ENCODE measurements at regions of chr7 and their contacts with region 1.

Region 1: GRCh38 chr7:117975476-117975875 is 102.2 kb upstream of the CTTNBP2 start:
- DNase-seq: peak; percentile 74
- H3K4me3 ChIP-seq: no peak overlapping the region
- H3K27ac ChIP-seq: peak overlapping the region; percentile 55
- H3K4me1 ChIP-seq: peaks cover 59% of the 10 kb centered on the region
- H3K27me3 ChIP-seq: no peaks in the 10 kb centered on the region
- CTCF ChIP-seq: no peak

Region 2: DNA sequence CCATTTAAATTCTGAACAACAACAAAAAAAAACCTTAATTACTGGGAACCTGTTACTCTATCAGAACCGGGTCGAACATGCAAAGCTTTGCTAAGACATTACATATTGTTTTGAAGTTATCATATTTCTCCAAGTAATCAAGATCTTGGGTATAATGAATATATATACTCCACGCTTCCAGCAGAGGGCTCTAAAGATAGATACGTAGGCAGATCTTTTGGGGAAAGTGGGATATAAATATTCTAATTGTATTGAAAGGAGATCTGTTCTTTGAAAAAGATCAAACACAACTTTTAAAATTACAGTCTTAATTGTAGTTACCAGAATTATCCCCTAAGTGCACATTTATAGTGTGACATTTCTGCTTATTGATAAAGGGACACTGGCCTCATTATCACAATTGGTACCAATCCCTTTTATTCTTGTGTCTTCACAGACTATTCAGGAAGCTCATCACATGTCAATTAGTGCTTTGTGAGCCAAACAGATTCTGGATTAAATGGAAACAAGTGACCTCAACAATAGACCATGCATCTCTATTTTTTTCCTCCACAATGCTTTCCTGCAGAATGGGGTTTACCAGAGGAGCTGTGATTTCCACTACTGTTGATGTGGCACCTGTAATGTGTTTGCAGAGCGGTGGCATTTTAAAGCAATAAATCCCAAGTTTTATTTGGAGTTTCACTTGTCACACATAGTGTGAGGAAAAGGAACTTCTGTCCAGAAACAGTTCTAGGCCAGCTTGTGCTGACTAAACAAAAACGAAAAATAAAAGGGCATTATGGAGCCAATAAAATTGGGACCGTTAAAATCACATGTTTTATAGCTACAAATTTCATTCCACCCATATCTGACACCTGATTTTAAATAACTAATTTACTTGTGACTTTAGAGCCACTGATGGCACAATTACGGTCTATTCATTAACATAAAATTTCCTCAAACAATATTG is 224.6 kb before region 1 on chr7:
- CTCF ChIA-PET with region 1: no interaction called
- POLR2A ChIA-PET with region 1: no interaction called
- intact Hi-C with region 1: loop called (anchors 2 kb)
- DNase-seq: peak; percentile 66
- H3K4me3 ChIP-seq: no peak overlapping the region
- H3K27ac ChIP-seq: no peak overlapping the region
- H3K4me1 ChIP-seq: peaks cover 15% of the 10 kb centered on the region
- H3K27me3 ChIP-seq: no peaks in the 10 kb centered on the region
- CTCF ChIP-seq: peak; percentile 74

Region 3: DNA sequence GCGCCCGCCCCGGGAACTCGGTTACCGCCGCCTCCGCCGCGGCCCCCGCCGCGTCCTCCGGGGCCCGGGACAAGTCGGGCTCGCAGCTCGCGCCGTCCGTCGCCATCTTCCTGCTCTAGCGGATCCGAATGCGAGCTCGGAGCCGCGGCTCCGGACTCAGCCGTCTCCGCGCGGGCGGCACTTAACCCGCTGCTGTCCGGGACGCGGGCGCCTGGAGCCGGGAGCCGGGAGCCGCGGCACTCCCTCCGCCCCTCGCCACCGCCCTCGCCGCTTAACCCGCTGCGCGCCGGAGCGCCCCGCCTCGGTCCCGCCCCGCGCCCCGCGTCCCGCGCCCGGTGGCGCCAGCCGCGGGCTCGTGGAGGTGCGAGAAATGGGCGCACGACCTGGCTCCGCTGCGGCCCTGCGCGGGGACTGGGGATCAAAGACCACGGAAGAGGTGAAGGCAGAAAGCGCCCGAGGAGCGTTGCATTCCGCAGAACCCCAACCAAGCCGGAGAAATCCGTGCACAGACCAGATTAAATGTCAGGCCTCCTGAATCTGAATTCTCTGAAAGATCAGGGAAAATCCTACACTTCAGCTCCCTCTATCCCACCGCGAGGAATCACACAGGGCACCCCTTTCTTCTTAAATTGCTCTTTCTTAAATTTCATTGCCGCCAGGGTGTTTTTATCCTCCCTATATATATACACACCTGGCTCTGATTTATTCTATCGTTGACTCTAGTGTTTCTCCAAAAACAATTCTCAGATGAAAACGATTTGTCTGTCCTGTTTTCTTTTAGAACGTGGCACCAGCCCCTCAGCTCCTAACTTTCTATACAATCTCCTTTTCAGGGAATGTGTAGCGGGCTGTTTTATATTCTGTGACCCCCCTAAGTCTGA is 101.9 kb before region 1 on chr7 and contains the start of gene CTTNBP2:
- CTCF ChIA-PET with region 1: no interaction called
- POLR2A ChIA-PET with region 1: no interaction called
- intact Hi-C with region 1: loop called (anchors 5 kb)
- DNase-seq: peak; percentile 65
- H3K4me3 ChIP-seq: peak within 1 kb of the TSS; percentile 85
- H3K27ac ChIP-seq: peak within 1 kb of the TSS; percentile 85
- H3K4me1 ChIP-seq: peaks cover 59% of the 10 kb centered on the region
- H3K27me3 ChIP-seq: no peaks in the 10 kb centered on the region
- CTCF ChIP-seq: peak; percentile 16; the same call in 1 of the 2 replicates
- total RNA-seq, gene CTTNBP2: 21.8 and 26.3 TPM in 2 replicates

Region 4: DNA sequence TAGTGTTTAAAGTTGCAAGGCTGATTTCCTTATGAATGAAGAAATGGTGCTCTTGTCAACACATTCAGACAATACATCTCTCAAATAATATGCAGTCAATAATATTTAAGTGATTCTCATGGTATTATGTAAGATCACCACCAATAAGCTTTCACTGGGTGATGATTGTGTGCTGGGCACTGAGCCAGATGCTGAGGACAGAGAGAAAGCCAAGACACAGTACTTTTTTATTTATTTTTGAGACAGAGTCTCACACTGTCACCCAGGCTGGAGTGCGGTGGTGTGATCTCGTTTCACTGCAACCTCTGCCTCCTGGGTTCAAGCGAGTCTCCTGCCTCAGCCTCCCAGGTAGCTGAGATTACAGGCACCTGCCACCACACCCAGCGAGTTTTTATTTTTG is 77.9 kb after region 1 on chr7:
- CTCF ChIA-PET with region 1: no interaction called
- POLR2A ChIA-PET with region 1: no interaction called
- intact Hi-C with region 1: loop called (anchors 5 kb)
- DNase-seq: peak; percentile 71
- H3K4me3 ChIP-seq: no peak overlapping the region
- H3K27ac ChIP-seq: no peak overlapping the region
- H3K4me1 ChIP-seq: peaks cover 27% of the 10 kb centered on the region
- H3K27me3 ChIP-seq: no peaks in the 10 kb centered on the region
- CTCF ChIP-seq: no peak

Region 5: GRCh38 chr7:118104812-118105441 is 129.5 kb after region 1 on chr7:
- CTCF ChIA-PET with region 1: no interaction called
- POLR2A ChIA-PET with region 1: no interaction called
- intact Hi-C with region 1: loop called (anchors 5 kb)
- DNase-seq: peak; percentile 68
- H3K4me3 ChIP-seq: no peak overlapping the region
- H3K27ac ChIP-seq: no peak overlapping the region
- H3K4me1 ChIP-seq: peaks cover 21% of the 10 kb centered on the region
- H3K27me3 ChIP-seq: no peaks in the 10 kb centered on the region
- CTCF ChIP-seq: peak; percentile 79

Region 6: DNA sequence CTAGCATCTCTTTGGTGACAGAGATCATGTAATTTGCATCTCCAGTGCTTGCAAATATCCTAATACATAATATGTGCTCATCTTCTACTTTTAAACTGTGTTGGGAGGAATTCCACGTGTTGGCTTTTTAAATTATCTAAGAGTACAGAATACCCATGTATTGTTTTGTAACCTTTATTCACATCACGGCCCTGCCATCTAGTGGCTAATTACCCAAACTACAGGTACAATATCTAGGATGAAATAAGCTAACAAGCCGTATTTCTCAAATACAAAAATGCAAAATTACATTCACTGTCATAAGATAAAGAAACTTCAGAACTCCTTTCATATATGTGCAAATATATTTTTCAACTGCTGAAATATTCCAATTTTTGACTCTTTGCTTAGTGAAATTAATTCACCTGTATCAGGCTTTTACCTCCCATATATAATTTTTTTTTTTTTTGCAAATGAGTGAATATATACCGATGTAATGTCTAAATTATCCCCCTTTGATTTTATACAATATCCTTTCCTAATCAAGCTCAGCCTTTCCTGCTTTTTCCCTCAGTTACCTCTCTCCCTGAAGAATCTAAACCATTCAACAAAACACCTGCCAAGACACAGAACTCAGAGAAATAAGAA is 178.2 kb after region 1 on chr7:
- CTCF ChIA-PET with region 1: no interaction called
- POLR2A ChIA-PET with region 1: no interaction called
- intact Hi-C with region 1: loop called (anchors 2 kb)
- DNase-seq: peak; percentile 77
- H3K4me3 ChIP-seq: no peak overlapping the region
- H3K27ac ChIP-seq: no peak overlapping the region
- H3K4me1 ChIP-seq: peaks cover 15% of the 10 kb centered on the region
- H3K27me3 ChIP-seq: no peaks in the 10 kb centered on the region
- CTCF ChIP-seq: peak; percentile 79

Region 7: GRCh38 chr7:118195837-118196474 is 220.5 kb after region 1 on chr7:
- CTCF ChIA-PET with region 1: no interaction called
- POLR2A ChIA-PET with region 1: no interaction called
- intact Hi-C with region 1: loop called (anchors 5 kb)
- DNase-seq: peak; percentile 77
- H3K4me3 ChIP-seq: no peak overlapping the region
- H3K27ac ChIP-seq: no peak overlapping the region
- H3K4me1 ChIP-seq: peaks cover 2% of the 10 kb centered on the region
- H3K27me3 ChIP-seq: no peaks in the 10 kb centered on the region
- CTCF ChIP-seq: peak; percentile 87